ENCODE measurements at regions of chr7 and their contacts with region 1.

Region 1: DNA sequence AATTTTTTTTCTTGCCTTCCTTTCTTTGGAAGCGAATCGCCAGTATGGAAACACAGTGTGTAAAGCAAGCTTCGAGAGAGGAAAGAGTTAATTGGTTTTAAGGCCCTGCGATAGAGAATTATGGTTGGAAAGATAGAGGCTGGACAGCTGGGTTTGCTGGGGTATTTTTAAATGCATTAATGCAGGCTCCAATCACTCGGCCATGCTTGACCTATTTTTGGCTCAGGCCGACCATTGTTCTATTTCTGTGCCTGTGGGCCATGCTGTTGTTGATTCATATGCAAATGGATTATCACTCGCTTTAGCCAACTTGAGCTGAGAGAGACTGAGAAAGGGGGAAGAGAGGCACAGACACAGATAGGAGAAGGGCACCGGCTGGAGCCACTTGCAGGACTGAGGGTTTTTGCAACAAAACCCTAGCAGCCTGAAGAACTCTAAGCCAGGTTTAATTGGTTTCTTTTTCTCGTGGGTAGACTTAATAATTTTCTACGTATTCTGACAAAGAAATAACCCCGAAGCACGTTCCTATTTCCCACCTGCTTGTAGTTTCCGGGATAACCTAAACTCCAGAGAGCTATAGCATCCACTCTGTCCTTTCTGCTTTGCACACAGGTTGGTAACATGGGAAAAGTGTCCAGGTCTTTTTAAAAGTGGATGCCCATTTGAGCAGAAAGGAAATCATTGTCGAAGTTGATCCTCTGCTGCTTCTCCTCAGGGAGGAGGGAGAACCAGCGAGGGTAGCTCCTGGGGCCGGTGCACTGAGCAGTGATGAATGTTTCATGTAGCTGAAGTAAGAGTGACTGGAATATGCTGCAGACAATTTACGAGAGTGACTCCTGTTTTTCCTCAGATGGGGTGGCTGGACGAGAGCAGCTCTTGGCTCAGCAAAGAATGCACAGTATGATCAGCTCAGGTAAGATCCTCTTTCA is at the start of gene HDAC9:
- DNase-seq: peak; percentile 14 to 56
- ATAC-seq: peak; percentile 90 to 94 (median 93)
- H3K4me3 ChIP-seq: peak within 1 kb of the TSS; percentile 69
- H3K27ac ChIP-seq: peak within 1 kb of the TSS; percentile 97
- H3K4me1 ChIP-seq: peaks cover 29% of the 10 kb centered on the region
- H3K27me3 ChIP-seq: no peaks in the 10 kb centered on the region
- CTCF ChIP-seq: no peak
- total RNA-seq, gene HDAC9: 16.8 to 34.2 (median 20.1) TPM

Region 2: GRCh38 chr7:18458830-18459229 is 36.8 kb before region 1 on chr7:
- intact Hi-C with region 1: loop called in 1 of 2 experiments (anchors 5 kb)
- DNase-seq: peak; percentile 40 to 64
- ATAC-seq: peak; percentile 97 to 99 (median 98)
- H3K4me3 ChIP-seq: peak overlapping the region; percentile 43
- H3K27ac ChIP-seq: peak overlapping the region; percentile 71
- H3K4me1 ChIP-seq: peaks cover 20% of the 10 kb centered on the region
- H3K27me3 ChIP-seq: no peaks in the 10 kb centered on the region
- CTCF ChIP-seq: no peak

Region 3: GRCh38 chr7:18538554-18539250 is 43.0 kb after region 1 on chr7:
- intact Hi-C with region 1: loop called in 1 of 2 experiments (anchors 5 kb)
- DNase-seq: no peak
- ATAC-seq: peak in 3 of 4 donors; percentile 25 to 38 (median 31)
- H3K4me3 ChIP-seq: no peak overlapping the region
- H3K27ac ChIP-seq: peak overlapping the region; percentile 65
- H3K4me1 ChIP-seq: peaks cover 36% of the 10 kb centered on the region
- H3K27me3 ChIP-seq: no peaks in the 10 kb centered on the region
- CTCF ChIP-seq: no peak

Region 4: DNA sequence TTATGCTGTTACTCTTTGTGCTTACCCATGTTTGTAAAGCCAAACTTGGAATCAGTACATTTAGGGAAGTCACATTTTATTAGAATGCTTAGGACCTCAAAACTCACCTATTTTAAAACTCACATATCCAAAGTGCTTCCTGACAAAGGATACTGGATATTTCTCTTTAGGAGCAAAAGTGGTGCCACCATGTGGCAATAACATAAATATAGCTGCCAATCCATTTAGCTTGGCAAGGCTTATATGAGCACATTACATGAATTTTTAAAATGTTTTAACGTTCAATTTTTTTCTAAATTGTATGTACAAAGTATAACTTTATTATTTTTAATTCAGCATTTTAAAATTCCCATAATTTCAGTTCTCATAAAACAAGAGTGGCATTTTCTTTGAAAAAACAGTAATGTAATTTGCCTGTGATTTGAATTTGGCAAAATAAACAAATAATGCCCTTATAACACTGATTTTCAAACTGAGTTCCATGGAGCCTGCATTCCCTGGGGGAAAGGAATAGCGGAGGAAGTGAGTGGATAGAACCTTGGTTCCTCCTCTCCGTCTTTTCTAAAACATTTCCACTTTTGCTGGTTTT is 75.3 kb after region 1 on chr7:
- intact Hi-C with region 1: loop called in 1 of 2 experiments (anchors 1 kb)
- DNase-seq: no peak
- ATAC-seq: peak in 2 of 4 donors; percentile 39 to 55
- H3K4me3 ChIP-seq: no peak overlapping the region
- H3K27ac ChIP-seq: no peak overlapping the region
- H3K4me1 ChIP-seq: peaks cover 32% of the 10 kb centered on the region
- H3K27me3 ChIP-seq: no peaks in the 10 kb centered on the region
- CTCF ChIP-seq: peak; percentile 54

Region 5: DNA sequence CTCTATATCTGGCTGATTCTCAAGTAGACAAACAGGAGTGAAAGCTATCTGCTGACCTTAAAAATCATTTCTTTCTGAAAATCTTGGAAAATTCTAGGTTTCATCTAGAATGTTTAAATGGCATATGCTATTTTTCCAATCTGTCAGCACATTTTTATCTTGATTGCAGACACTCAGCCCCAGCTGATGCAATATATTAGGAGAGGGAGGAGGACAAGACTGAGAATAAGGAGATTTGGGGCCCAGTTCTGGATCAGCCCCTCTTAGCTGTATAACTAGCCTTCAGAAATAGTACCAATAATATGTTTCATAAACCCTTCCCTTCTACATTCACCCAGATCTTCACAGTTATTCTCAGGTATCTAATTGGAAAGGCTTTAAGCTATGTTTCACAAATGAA is 131.0 kb after region 1 on chr7:
- intact Hi-C with region 1: no loop called
- DNase-seq: no peak
- ATAC-seq: no peak
- H3K4me3 ChIP-seq: no peak overlapping the region
- H3K27ac ChIP-seq: no peak overlapping the region
- H3K4me1 ChIP-seq: no peaks in the 10 kb centered on the region
- H3K27me3 ChIP-seq: no peaks in the 10 kb centered on the region
- CTCF ChIP-seq: no peak

Measured in psoas muscle (tissue), 8 donors.